ENCODE measurements at regions of chr5 and their contacts with region 1.

Region 1: DNA sequence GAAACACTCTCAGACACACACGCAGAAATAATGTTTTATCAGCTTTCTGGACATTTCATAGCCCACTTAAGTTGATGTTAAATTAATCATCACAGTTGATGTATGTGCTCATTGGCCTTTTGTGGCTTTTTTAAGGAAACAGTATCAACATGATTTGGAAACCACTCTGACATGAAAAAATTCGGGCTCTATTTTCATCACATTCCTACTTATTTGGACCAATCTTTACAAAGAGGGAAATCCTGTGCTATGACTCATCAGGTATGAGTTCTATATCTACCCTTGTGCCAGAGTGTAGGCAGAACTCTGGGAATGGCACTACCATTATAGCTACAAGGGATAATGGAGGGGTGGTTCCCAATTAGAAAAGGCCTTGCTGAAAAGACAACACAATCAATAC is 388.4 kb upstream of the PTGER4 start:
- DNase-seq: no peak
- H3K4me3 Mint-ChIP-seq: no peak overlapping the region
- H3K27ac Mint-ChIP-seq: no peak overlapping the region
- H3K4me1 Mint-ChIP-seq: peaks cover 20% of the 10 kb centered on the region
- H3K27me3 Mint-ChIP-seq: no peaks in the 10 kb centered on the region

Region 2: DNA sequence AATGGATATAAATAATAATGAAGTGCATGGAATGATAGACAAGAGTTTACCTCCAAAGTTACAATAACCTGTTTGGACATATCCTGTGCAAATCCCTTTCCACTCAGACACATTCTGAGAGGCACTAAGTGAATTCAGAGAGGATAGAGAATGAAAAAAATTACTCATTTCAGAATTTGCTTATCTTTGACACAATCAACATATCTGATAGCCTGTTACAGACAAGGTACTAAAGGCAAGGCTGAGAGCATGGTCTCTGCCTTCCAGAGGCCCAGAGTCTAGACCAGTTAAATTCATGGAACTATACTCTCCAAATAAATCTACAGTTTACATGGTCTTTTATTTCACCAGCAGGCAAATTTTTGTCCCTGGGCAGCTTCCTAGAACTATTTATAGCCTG is 16.6 kb after region 1 on chr5:
- CTCF ChIA-PET with region 1: interaction called, 3 read pairs
- intact Hi-C with region 1: loop called (anchors 2 kb)
- DNase-seq: no peak
- H3K4me3 Mint-ChIP-seq: no peak overlapping the region
- H3K27ac Mint-ChIP-seq: no peak overlapping the region
- H3K4me1 Mint-ChIP-seq: no peaks in the 10 kb centered on the region
- H3K27me3 Mint-ChIP-seq: no peaks in the 10 kb centered on the region

Region 3: DNA sequence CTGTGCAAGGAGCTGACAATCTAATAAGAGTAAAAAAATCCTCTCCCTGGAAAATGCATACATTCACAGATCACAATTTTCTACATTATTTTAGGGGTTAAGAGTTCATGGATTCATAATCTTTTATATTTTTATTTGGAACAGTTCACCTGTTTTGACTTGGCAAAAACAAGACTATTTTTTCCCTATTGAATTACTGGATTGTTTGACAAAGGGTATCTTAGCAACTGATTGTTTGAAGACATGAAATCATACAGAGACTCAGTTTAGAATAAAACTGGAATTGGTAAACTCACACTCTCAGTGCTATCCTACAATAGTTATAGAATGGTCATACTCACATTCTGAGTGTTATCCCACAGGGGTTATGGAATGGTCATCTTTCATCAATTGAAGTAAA is 30.2 kb after region 1 on chr5:
- CTCF ChIA-PET with region 1: no interaction called
- intact Hi-C with region 1: loop called (anchors 2 kb)
- DNase-seq: no peak
- H3K4me3 Mint-ChIP-seq: no peak overlapping the region
- H3K27ac Mint-ChIP-seq: no peak overlapping the region
- H3K4me1 Mint-ChIP-seq: peaks cover 12% of the 10 kb centered on the region
- H3K27me3 Mint-ChIP-seq: no peaks in the 10 kb centered on the region

Region 4: GRCh38 chr5:40477856-40478546 is 186.7 kb after region 1 on chr5:
- CTCF ChIA-PET with region 1: no interaction called
- intact Hi-C with region 1: no loop called
- DNase-seq: no peak
- H3K4me3 Mint-ChIP-seq: no peak overlapping the region
- H3K27ac Mint-ChIP-seq: no peak overlapping the region
- H3K4me1 Mint-ChIP-seq: peaks cover 28% of the 10 kb centered on the region
- H3K27me3 Mint-ChIP-seq: no peaks in the 10 kb centered on the region